Activated CD4-positive, alpha-beta T cell treated with anti-CD3 and anti-CD28 coated beads, Interleukin-2, amount 10 ng/mL, durations not matched to agents 24 days and 14 days (primary cell): ENCODE measurements at regions of chr11 and their contacts with region 1.

Region 1: DNA sequence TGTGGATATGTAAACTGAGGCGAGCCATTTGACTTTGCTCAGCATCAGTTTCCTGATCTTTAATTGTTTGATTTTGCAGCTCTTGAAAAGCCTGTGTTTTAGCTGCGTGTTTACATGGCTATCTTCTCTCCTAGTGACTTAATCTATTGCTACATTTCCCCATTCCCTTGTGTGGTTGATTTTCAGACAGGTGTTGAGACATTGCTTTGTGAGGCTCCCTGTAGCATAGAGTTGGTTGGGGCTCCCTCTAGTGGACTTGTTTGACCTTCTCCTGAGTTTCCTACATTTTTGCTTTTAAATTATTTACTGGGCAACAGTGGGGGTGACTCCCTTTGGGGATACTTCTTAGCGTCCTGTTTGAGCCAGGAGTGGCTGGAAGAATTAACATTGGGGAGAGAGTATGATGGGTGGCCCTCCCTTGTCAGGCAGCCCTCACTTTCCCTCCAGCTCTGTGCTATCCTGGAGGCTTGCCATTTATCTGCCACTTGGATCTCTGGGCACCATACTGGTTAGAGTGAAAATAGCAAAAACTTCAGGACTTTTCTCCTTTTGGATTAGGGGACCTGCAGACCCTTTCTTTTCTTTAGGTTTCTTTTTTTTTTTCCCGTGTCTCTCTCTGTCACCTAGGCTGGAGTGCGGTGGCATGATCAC is 9.2 kb upstream of the CBL start:
- DNase-seq: peak; percentile 93
- H3K4me3 Mint-ChIP-seq: no peak overlapping the region
- H3K27ac Mint-ChIP-seq: no peak overlapping the region
- H3K4me1 Mint-ChIP-seq: peaks cover 6% of the 10 kb centered on the region
- H3K27me3 Mint-ChIP-seq: no peaks in the 10 kb centered on the region

Region 2: DNA sequence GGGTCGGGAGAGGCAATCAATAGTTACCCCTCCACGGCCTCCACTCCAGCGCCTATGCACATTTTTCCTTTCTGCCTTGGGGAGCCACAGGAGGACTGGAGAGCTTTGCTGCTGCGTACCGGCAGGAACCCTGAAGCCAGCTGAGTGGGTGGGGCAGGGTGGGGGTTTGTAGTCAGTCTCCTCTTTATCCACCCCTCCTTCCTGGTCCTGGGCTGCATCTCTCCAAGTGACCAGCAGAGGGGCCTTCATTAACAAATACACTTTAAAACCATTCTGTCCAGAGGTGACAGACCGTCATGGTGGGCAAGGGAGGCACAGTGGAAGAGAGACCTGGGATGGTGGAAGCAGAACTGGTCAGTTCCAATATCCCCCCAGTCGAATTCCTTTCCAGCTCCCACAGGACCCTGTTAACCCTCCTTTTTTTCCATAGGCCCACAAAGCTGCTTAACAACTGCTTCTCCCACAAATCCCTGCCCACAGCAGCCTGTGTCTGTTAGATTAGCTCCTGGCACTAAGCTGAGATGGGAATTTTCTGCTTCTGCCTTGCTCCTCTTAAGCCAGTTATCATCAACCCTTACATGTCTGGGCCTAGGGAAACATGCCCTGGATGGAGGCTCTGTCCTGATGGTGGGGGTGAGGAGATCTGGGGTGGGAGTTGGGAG is 52.0 kb before region 1 on chr11:
- intact Hi-C with region 1: loop called (anchors 2 kb)
- DNase-seq: peak; percentile 74
- H3K4me3 Mint-ChIP-seq: no peak overlapping the region
- H3K27ac Mint-ChIP-seq: no peak overlapping the region
- H3K4me1 Mint-ChIP-seq: peaks cover 6% of the 10 kb centered on the region
- H3K27me3 Mint-ChIP-seq: peaks cover 42% of the 10 kb centered on the region

Region 3: DNA sequence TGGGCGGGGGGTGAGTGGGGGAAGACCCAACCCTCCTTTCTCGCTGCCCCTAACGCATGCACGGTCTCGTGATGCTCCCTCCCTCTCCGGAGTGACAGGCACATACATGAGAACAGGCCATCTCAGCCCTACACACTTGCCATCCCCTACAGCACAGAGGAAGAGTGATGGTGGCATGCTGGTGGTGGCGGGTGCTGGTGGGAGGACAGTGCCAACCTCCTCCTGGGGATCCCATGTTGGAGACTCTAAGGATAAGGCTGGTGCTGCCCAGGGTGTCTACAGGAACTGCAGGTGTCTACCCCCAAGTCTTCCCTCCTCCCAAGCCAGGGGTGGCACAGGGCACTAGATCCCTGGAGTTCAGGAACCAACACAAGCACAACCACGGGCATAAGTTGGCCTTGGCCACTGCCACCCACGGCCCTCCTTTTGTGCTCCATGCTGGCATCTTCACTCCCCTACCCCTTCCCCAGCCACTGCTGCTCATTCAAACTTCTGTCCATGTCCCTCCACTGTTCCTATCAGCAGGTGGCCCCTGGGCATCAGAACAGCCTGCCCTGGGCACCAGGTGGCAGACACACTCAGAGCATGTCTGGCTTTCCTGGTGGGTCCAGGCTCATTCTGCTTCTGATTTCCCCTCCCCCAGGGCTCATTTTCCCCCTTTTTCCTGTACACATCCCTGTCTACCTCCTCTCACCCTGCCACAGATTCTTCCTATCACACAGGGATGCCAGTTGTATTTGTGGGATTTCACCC is 34.9 kb before region 1 on chr11:
- intact Hi-C with region 1: no loop called
- DNase-seq: no peak
- H3K4me3 Mint-ChIP-seq: no peak overlapping the region
- H3K27ac Mint-ChIP-seq: no peak overlapping the region
- H3K4me1 Mint-ChIP-seq: no peaks in the 10 kb centered on the region
- H3K27me3 Mint-ChIP-seq: peaks cover 2% of the 10 kb centered on the region